HepG2 (cell line): ENCODE measurements at regions of chr17 and their contacts with region 1.

Region 1: DNA sequence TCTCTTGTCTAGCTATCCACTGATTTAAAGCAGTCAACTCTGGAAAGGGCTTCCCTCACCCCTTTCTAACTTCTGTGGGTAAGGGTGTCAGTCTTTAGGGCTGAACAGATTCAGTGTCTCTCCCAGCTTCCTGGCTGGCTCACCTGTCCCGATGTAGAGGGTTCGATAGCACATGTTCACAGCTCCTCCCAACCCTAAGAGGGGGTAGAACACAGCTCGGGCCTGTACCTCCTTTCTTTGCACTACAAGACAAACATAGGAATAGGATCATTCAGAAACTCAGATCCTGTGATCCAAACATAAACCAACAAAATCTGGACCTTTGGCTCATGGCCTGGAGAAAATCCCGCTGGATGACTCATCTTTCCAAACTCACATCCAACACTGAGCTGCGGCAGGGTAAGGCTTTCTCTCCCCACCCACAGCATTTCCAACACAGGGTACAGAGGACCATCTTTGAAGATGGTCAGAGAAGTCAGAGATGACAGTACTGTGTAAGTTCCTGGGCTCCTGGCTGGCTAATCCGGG is 5.8 kb upstream of the DHRS13 start:
- DNase-seq: peak; percentile 86
- ATAC-seq: peak; percentile 80
- H3K4me3 ChIP-seq: no peak overlapping the region; a peak in 1 of 6 replicates
- H3K27ac ChIP-seq: peak overlapping the region; percentile 70
- H3K4me1 ChIP-seq: peaks cover 63% of the 10 kb centered on the region
- H3K27me3 ChIP-seq: no peaks in the 10 kb centered on the region
- CTCF ChIP-seq: 0 out of 2 replicates have a peak, but pooled peaks have one; percentile 5
- EP300 ChIP-seq: no peak
- POLR2A ChIP-seq: no peak
- RAD21 ChIP-seq: no peak

Region 2: GRCh38 chr17:28896884-28897768 is 11.6 kb before region 1 on chr17 and contains the start of gene FLOT2:
- CTCF ChIA-PET with region 1: no interaction called
- POLR2A ChIA-PET with region 1: interaction called, 16 read pairs
- in situ Hi-C with region 1: no loop called
- intact Hi-C with region 1: no loop called
- DNase-seq: peak; percentile 54
- ATAC-seq: peak; percentile 86
- H3K4me3 ChIP-seq: peak within 1 kb of the TSS; percentile 76 to 93 (median 89)
- H3K27ac ChIP-seq: peak within 1 kb of the TSS; percentile 84
- H3K4me1 ChIP-seq: peaks cover 53% of the 10 kb centered on the region
- H3K27me3 ChIP-seq: no peaks in the 10 kb centered on the region; a peak in 1 of 5 replicates
- CTCF ChIP-seq: peak; percentile 50
- EP300 ChIP-seq: 0 out of 4 replicates have a peak, but pooled peaks of 1 of the 2 experiments have one; percentile 11
- POLR2A ChIP-seq: peak; percentile 40 to 83
- RAD21 ChIP-seq: peak; percentile 49; the same call in 1 of the 2 replicates
- total RNA-seq, gene FLOT2: 54.3 and 60.7 TPM in 2 replicates

Region 3: GRCh38 chr17:29089601-29090044 is 180.9 kb after region 1 on chr17:
- CTCF ChIA-PET with region 1: no interaction called
- POLR2A ChIA-PET with region 1: no interaction called
- in situ Hi-C with region 1: no loop called
- intact Hi-C with region 1: no loop called
- DNase-seq: no peak
- ATAC-seq: no peak
- H3K4me3 ChIP-seq: no peak overlapping the region
- H3K27ac ChIP-seq: no peak overlapping the region
- H3K4me1 ChIP-seq: no peaks in the 10 kb centered on the region
- H3K27me3 ChIP-seq: no peaks in the 10 kb centered on the region
- CTCF ChIP-seq: no peak
- EP300 ChIP-seq: no peak
- POLR2A ChIP-seq: no peak
- RAD21 ChIP-seq: no peak